Heart left ventricle (tissue), 16 donors: ENCODE measurements at regions of chr12 and their contacts with region 1.

Region 1: GRCh38 chr12:53231826-53232645 is at the start of gene RARG:
- DNase-seq: peak in 4 of 5 donors; percentile 61 to 70 (median 64)
- ATAC-seq: peak; percentile 32 to 61 (median 56)
- H3K4me3 ChIP-seq: peak within 1 kb of the TSS; percentile 22 to 74 (median 66)
- H3K27ac ChIP-seq: peak within 1 kb of the TSS; percentile 8 to 86 (median 74)
- H3K4me1 ChIP-seq: peaks cover 0 to 35% (median 24%) of the 10 kb centered on the region in 12 donors
- H3K27me3 ChIP-seq: no peaks in the 10 kb centered on the region
- CTCF ChIP-seq: peak in 1 of 12 donors; percentile 4
- POLR2A ChIP-seq: no peak
- total RNA-seq, gene RARG: 6.4 to 22.5 (median 16.0) TPM

Region 2: DNA sequence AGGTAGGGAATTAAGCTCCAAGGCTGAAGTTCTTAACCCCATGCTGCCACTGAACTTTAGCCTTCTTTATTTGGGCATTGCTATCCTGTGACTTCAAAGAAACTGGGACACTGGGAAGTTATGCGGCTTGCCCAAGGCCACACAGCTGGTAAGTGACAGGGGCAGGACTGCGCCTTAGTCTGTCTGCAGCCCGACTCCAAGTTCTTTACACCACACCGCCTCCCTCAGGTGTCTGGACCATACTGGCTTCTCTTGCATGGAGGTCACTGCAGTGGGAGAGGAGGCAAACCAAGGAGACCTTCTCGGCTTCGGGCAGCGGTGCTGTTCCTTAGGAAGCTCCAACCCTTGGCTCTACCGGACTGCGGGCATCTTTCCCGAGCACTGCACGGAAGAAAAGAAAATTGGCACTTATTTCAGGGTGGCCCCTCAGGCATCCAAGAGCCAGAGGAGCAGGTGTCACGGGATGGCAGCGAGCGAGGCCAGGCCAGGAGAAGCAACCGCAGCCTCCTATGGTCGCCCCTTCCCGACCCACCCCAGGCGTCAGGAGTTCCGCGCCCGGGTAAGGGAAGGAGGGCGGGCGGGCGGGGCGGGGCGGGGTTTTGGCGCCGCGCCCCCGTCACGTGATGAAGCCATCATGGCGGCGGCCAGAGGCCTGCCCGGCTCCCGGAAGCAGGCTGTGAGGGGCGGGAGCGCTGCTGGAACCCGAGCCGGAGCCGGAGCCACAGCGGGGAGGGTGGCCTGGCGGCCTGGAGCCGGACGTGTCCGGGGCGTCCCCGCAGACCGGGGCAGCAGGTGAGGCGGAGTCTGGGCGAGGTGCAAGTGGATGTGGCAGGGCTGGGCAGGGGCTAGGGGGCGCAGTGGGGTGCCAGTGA is 19.7 kb after region 1 on chr12:
- intact Hi-C with region 1: loop called in 1 of 10 experiments (anchors 2 kb)
- DNase-seq: peak; percentile 81 to 90 (median 84)
- ATAC-seq: peak; percentile 83 to 95 (median 92)
- H3K4me3 ChIP-seq: peak overlapping the region; percentile 58 to 97 (median 82)
- H3K27ac ChIP-seq: peak overlapping the region; percentile 66 to 97 (median 94)
- H3K4me1 ChIP-seq: peaks cover 0 to 39% (median 24%) of the 10 kb centered on the region in 12 donors
- H3K27me3 ChIP-seq: no peaks in the 10 kb centered on the region
- CTCF ChIP-seq: peak in 11 of 12 donors; percentile 5 to 64 (median 31)
- POLR2A ChIP-seq: peak in 1 of 2 donors; percentile 49

Region 3: DNA sequence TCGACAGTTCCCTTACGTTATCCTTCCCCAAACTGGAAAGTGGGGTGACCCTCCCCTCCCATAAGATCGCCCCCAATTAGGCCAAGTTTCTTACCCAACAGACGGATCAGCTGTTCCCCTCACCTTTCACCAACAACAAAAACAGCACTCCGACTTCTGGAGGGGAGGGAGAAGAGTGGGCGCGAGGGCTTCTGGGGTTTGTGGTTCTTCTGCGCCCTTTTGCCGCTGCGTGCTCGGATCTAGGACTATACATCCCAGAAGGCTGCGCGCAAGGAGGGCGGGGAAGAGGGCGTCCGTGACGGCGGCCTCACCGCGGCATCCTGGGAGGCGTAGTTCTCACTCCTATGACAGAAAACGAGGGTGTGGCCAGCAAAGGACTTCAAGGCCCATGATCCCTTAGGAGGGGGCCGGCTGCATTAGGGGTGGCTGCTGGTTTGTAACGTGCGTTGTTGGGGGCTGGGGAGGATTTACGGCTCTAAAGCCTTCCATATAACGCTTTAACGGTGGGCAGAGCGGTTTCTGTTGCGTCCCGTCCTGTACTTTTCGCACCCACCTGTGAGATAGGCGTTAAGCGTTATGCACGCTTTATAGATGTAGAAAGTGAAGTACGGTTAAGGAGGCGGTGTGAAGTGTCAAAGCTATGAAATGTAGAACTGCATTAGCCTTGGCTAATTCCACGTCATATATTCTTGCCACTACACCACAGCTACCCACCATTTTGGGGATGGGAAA is 495.4 kb after region 1 on chr12 and contains the start of gene CALCOCO1:
- intact Hi-C with region 1: no loop called
- DNase-seq: peak; percentile 97 to 99 (median 98)
- ATAC-seq: peak; percentile 99 to 100 (median 100)
- H3K4me3 ChIP-seq: peak within 1 kb of the TSS; percentile 64 to 97 (median 80)
- H3K27ac ChIP-seq: peak within 1 kb of the TSS; percentile 37 to 90 (median 78)
- H3K4me1 ChIP-seq: peaks cover 0 to 24% (median 20%) of the 10 kb centered on the region in 12 donors
- H3K27me3 ChIP-seq: no peaks in the 10 kb centered on the region
- CTCF ChIP-seq: no peak
- POLR2A ChIP-seq: peak; percentile 30 to 73
- total RNA-seq, gene CALCOCO1: 183 to 352 (median 205) TPM